Pancreas (tissue), 10 donors: ENCODE measurements at regions of chr5 and their contacts with region 1.

Region 1: GRCh38 chr5:932628-933250 is 40.1 kb downstream of the TRIP13 start:
- DNase-seq: peak in 1 of 6 donors; percentile 6
- ATAC-seq: peak in 1 of 4 donors; percentile 30
- H3K4me3 ChIP-seq: no peak overlapping the region
- H3K27ac ChIP-seq: no peak overlapping the region
- H3K4me1 ChIP-seq: no peaks in the 10 kb centered on the region
- H3K27me3 ChIP-seq: no peaks in the 10 kb centered on the region
- CTCF ChIP-seq: no peak

Region 2: GRCh38 chr5:1011226-1011631 is 78.5 kb after region 1 on chr5:
- intact Hi-C with region 1: loop called in 1 of 3 experiments (anchors 5 kb)
- DNase-seq: peak; percentile 55 to 86 (median 79)
- ATAC-seq: peak; percentile 51 to 85 (median 71)
- H3K4me3 ChIP-seq: no peak overlapping the region
- H3K27ac ChIP-seq: no peak overlapping the region
- H3K4me1 ChIP-seq: peaks cover 4 to 16% (median 6%) of the 10 kb centered on the region in 3 donors
- H3K27me3 ChIP-seq: no peaks in the 10 kb centered on the region
- CTCF ChIP-seq: peak; percentile 42 to 57 (median 47)